ENCODE measurements at regions of chr10 and their contacts with region 1.

Region 1: GRCh38 chr10:6586501-6586900 is 6.4 kb upstream of the PRKCQ start:
- DNase-seq: peak in 1 of 5 donors; percentile 46
- H3K4me3 ChIP-seq: peak overlapping the region in 1 of 2 donors; percentile 41
- H3K4me3 Mint-ChIP-seq: peak overlapping the region; percentile 90 to 99 (median 94)
- H3K27ac ChIP-seq: peak overlapping the region; percentile 29
- H3K27ac Mint-ChIP-seq: peak overlapping the region; percentile 82 to 93 (median 90)
- H3K4me1 ChIP-seq: peaks cover 91% of the 10 kb centered on the region
- H3K4me1 Mint-ChIP-seq: peaks cover 61 to 98% (median 84%) of the 10 kb centered on the region in 4 donors
- H3K27me3 ChIP-seq: no peaks in the 10 kb centered on the region
- H3K27me3 Mint-ChIP-seq: no peaks in the 10 kb centered on the region

Region 2: GRCh38 chr10:6563075-6563474 is 23.4 kb before region 1 on chr10:
- CTCF ChIA-PET with region 1: interaction called, 12 read pairs
- POLR2A ChIA-PET with region 1: interaction called, 124 read pairs
- intact Hi-C with region 1: no loop called
- DNase-seq: peak in 2 of 5 donors; percentile 35 to 62
- H3K4me3 ChIP-seq: peak overlapping the region in 1 of 2 donors; percentile 21
- H3K4me3 Mint-ChIP-seq: peak overlapping the region; percentile 68 to 90 (median 79)
- H3K27ac ChIP-seq: peak overlapping the region; percentile 56
- H3K27ac Mint-ChIP-seq: peak overlapping the region; percentile 85 to 94 (median 90)
- H3K4me1 ChIP-seq: peaks cover 98% of the 10 kb centered on the region
- H3K4me1 Mint-ChIP-seq: peaks cover 79 to 94% (median 88%) of the 10 kb centered on the region in 4 donors
- H3K27me3 ChIP-seq: no peaks in the 10 kb centered on the region
- H3K27me3 Mint-ChIP-seq: no peaks in the 10 kb centered on the region

Region 3: DNA sequence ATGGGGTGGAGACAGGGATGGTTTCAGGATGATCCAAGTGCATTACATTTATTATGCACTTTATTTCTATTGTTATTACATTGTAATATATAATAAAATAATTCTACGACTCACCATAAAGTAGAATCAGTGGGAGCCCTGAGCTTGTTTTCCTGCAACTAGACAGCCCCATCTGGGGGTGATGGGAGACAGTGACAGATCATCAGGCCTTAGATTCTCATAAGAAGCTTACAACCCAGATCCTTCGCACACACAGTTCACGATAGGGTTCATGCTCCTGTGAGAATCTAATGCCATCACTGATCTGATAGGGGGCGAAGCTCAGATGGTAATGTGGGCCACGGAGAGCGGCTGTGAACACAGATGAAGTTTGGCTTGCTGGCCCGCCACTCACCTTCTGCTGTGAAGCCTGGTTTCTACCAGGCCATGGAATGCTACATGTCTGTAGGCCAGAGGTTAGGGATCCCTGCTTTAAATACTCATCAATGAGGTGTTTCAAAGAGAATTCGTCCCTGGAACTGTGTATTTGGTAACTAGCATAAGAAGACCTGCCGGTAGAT is 14.8 kb after region 1 on chr10:
- CTCF ChIA-PET with region 1: interaction called, 106 read pairs
- POLR2A ChIA-PET with region 1: interaction called, 355 read pairs
- intact Hi-C with region 1: no loop called
- DNase-seq: peak; percentile 47 to 55 (median 53)
- H3K4me3 ChIP-seq: no peak overlapping the region
- H3K4me3 Mint-ChIP-seq: peak overlapping the region in 7 of 8 donors; percentile 38 to 85 (median 77)
- H3K27ac ChIP-seq: no peak overlapping the region
- H3K27ac Mint-ChIP-seq: peak overlapping the region; percentile 63 to 92 (median 85)
- H3K4me1 ChIP-seq: peaks cover 67% of the 10 kb centered on the region
- H3K4me1 Mint-ChIP-seq: peaks cover 46 to 81% (median 63%) of the 10 kb centered on the region in 4 donors
- H3K27me3 ChIP-seq: no peaks in the 10 kb centered on the region
- H3K27me3 Mint-ChIP-seq: no peaks in the 10 kb centered on the region

Region 4: GRCh38 chr10:6607778-6608177 is 21.3 kb after region 1 on chr10:
- CTCF ChIA-PET with region 1: interaction called, 106 read pairs
- POLR2A ChIA-PET with region 1: interaction called, 355 read pairs
- intact Hi-C with region 1: no loop called
- DNase-seq: no peak
- H3K4me3 ChIP-seq: no peak overlapping the region
- H3K4me3 Mint-ChIP-seq: peak overlapping the region in 1 of 8 donors; percentile 72
- H3K27ac ChIP-seq: peak overlapping the region; percentile 43
- H3K27ac Mint-ChIP-seq: peak overlapping the region; percentile 73 to 97 (median 93)
- H3K4me1 ChIP-seq: peaks cover 47% of the 10 kb centered on the region
- H3K4me1 Mint-ChIP-seq: peaks cover 43 to 74% (median 53%) of the 10 kb centered on the region in 4 donors
- H3K27me3 ChIP-seq: no peaks in the 10 kb centered on the region
- H3K27me3 Mint-ChIP-seq: no peaks in the 10 kb centered on the region